ENCODE measurements at regions of chr13 and their contacts with region 1.

Region 1: GRCh38 chr13:51070005-51070649 is 40.9 kb downstream of the C13orf42 start:
- H3K4me3 ChIP-seq: no peak overlapping the region
- H3K27ac ChIP-seq: no peak overlapping the region
- H3K4me1 ChIP-seq: no peaks in the 10 kb centered on the region
- CTCF ChIP-seq: peak; percentile 80

Region 2: GRCh38 chr13:49976314-49977258 is 1093.5 kb before region 1 on chr13:
- CTCF ChIA-PET with region 1: interaction called, 10 read pairs
- POLR2A ChIA-PET with region 1: no interaction called
- H3K4me3 ChIP-seq: no peak overlapping the region
- H3K27ac ChIP-seq: no peak overlapping the region
- H3K4me1 ChIP-seq: no peaks in the 10 kb centered on the region
- CTCF ChIP-seq: no peak; the same call in 1 of the 2 replicates

Measured in HEK293 (cell line).